GM12878 (cell line): ENCODE measurements at regions of chr7 and their contacts with region 1.

Region 1: GRCh38 chr7:104848138-104848990 is 165.6 kb upstream of the KMT2E start:
- DNase-seq: no peak
- ATAC-seq: peak; percentile 78
- H3K4me3 ChIP-seq: no peak overlapping the region
- H3K27ac ChIP-seq: no peak overlapping the region
- H3K4me1 ChIP-seq: peaks cover 4% of the 10 kb centered on the region; the same call in 1 of the 2 replicates
- H3K27me3 ChIP-seq: no peaks in the 10 kb centered on the region
- CTCF ChIP-seq: peak; percentile 76 to 89 (median 79)
- EP300 ChIP-seq: no peak
- POLR2A ChIP-seq: no peak
- RAD21 ChIP-seq: peak; percentile 90

Region 2: DNA sequence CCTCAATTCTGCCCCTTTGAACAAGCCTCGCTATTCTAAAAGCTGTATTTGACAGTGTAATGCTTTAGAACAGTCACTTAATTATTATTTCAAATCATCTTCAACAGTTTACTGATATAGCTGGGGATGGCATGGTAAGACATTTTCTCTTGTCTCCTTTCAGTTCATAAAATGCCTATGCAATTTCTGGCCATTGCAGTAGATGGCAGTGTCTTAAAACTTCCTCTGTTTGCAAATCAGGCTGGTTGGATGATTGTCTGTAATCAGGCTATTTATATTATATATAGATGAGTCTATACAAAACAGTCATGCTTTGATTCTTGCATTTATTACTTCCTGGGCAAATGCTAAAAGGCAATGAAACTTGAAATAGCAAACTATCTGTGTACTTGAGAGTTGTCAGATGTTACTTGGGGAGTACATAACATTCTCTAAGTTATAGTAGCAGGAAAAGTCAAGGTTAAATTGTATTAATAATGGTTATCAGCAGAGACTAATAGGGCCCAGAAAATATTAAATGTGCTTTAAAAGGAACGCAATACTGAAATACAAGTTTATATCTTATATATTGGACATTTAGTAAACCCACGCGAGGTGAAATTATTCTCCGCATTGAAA is 575.5 kb before region 1 on chr7:
- CTCF ChIA-PET with region 1: interaction called, 9 read pairs
- POLR2A ChIA-PET with region 1: no interaction called
- RAD21 ChIA-PET with region 1: no interaction called
- SMC1A ChIA-PET with region 1: no interaction called
- in situ Hi-C with region 1: no loop called
- intact Hi-C with region 1: loop called (anchors 5 kb)
- DNase-seq: no peak
- ATAC-seq: peak; percentile 62
- H3K4me3 ChIP-seq: no peak overlapping the region
- H3K27ac ChIP-seq: no peak overlapping the region
- H3K4me1 ChIP-seq: no peaks in the 10 kb centered on the region
- H3K27me3 ChIP-seq: no peaks in the 10 kb centered on the region
- CTCF ChIP-seq: peak; percentile 52 to 61 (median 57)
- EP300 ChIP-seq: no peak
- POLR2A ChIP-seq: no peak
- RAD21 ChIP-seq: peak; percentile 63

Region 3: DNA sequence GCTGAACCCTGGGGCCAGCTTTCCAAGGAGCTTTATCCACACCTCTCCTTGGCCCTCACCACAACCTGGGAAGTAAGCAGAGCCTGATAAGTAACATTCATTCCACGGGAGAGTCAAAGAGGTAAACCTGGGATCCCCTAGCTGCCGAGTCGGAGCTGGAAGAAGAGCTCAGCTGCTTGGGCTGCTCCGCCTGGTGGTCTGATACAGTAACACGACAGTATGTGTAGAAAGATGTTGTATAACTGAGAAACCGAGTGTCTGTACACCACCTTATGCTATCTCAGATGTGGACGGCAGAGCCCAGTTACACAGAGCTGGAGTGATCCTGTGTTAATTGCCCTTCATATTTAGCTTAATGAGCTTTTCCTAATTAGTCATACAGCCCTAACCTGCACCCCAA is 14.4 kb after region 1 on chr7:
- CTCF ChIA-PET with region 1: interaction called, 35 read pairs
- POLR2A ChIA-PET with region 1: interaction called, 3 read pairs
- RAD21 ChIA-PET with region 1: no interaction called
- SMC1A ChIA-PET with region 1: interaction called, 10 read pairs
- in situ Hi-C with region 1: no loop called
- intact Hi-C with region 1: no loop called
- DNase-seq: no peak
- ATAC-seq: no peak; the same call in 2 of the 3 replicates
- H3K4me3 ChIP-seq: no peak overlapping the region
- H3K27ac ChIP-seq: no peak overlapping the region
- H3K4me1 ChIP-seq: peaks cover 8% of the 10 kb centered on the region
- H3K27me3 ChIP-seq: no peaks in the 10 kb centered on the region
- CTCF ChIP-seq: no peak
- EP300 ChIP-seq: no peak
- POLR2A ChIP-seq: no peak
- RAD21 ChIP-seq: no peak